ENCODE measurements at regions of chr3 and their contacts with region 1.

Region 1: GRCh38 chr3:14261229-14261628 is 82.6 kb downstream of the LSM3 start:
- DNase-seq: peak; percentile 64 to 90
- H3K4me3 ChIP-seq: no peak overlapping the region
- H3K4me1 ChIP-seq: no peaks in the 10 kb centered on the region
- H3K27me3 ChIP-seq: no peaks in the 10 kb centered on the region; the same call in 1 of the 2 replicates

Region 2: DNA sequence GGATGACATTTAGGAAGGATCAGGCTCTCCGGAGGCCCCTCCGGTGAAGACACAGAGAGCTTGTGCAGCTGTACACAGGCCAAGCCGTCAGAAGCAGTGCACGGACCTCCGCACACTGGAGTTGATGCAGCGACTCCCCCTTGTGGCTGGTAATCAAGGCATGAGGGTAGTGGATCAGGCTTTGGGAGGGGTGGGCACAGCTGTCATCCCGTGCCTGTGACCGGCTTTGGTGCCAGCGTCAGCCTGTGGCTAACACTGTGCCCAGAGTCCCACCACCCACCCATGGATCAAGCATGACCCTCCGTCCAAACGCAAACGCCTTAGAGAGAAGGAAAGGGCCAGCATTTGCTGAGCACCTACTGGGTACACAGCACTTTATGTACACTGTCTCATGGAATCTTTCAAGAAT is 287.1 kb after region 1 on chr3:
- in situ Hi-C with region 1: loop called (anchors 5 kb)
- DNase-seq: peak; percentile 40 to 80
- H3K4me3 ChIP-seq: no peak overlapping the region
- H3K4me1 ChIP-seq: no peaks in the 10 kb centered on the region
- H3K27me3 ChIP-seq: no peaks in the 10 kb centered on the region

Measured in HAP-1 (cell line).